Right cardiac atrium (tissue), 5 donors: ENCODE measurements at regions of chr11 and their contacts with region 1.

Region 1: GRCh38 chr11:79076526-79077115 is 364.2 kb downstream of the TENM4 start:
- DNase-seq: peak; percentile 53 to 83 (median 71)
- ATAC-seq: peak in 1 of 2 donors; percentile 47
- H3K4me3 ChIP-seq: no peak overlapping the region
- H3K27ac ChIP-seq: no peak overlapping the region
- H3K4me1 ChIP-seq: no peaks in the 10 kb centered on the region
- H3K27me3 ChIP-seq: no peaks in the 10 kb centered on the region

Region 2: DNA sequence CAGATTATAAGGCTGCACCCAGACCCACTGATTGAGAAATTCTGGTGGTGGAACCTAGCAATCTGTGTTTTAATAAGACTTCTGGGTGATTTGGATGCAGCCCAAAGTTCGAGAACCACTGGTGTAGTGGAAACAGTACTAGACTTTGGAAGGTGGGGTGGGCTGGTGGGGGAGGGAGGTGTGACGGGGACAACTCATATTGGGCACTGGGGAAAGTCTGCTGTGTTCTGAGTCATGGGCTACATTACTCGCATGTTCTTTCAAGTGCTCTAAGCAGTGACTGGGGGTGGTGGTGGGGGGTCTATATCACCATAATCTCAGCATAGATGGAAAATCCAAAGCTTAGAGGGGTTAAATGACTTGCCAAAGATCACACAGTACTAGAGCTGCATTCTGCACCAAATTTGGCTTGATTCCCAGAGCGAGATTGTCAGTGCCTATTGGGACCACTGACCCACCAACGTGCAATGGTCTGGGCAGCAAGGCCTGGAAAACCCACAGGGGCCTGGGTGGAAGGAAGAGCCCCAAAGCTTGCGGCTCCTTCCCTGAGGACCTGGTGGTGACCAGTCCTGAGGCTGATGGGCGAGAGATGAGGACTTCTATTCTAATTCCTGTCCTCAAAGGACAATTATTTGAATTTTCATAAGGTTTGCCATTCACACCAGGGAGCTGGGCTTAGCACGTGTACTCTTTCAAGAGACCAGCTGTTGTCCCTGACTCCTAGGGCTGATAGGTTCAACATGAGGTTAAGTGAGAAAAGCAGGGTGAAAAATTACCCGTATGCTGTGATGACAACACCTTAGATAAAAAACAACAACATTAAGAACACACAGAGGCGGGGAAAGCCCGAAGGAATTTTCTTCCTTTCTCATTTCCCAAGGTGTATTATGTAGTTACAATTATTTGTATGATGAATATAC is 424.4 kb before region 1 on chr11:
- intact Hi-C with region 1: loop called (anchors 5 to 10 kb)
- DNase-seq: no peak
- ATAC-seq: no peak
- H3K4me3 ChIP-seq: no peak overlapping the region
- H3K27ac ChIP-seq: no peak overlapping the region
- H3K4me1 ChIP-seq: no peaks in the 10 kb centered on the region
- H3K27me3 ChIP-seq: no peaks in the 10 kb centered on the region

Region 3: DNA sequence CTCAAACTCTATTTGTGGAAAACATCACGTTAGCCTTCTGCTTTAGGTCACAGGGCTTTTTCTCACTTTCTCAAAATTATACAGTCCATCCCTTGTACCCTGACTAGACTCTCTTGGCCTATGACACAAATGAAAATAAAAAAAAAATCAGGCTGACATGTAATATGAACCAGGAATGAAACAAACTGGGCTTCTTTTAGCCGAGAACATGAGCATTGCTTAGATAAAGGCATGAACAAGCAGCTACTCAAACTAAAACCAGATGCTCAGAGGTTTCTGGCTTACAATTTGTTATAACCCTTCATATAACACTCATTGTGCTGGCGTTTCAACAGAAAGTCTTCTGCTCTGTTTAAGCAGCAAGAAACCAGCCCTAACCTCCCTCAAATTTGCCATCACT is 236.4 kb before region 1 on chr11:
- intact Hi-C with region 1: no loop called
- DNase-seq: no peak
- ATAC-seq: peak; percentile 75 to 87
- H3K4me3 ChIP-seq: no peak overlapping the region
- H3K27ac ChIP-seq: peak overlapping the region; percentile 56
- H3K4me1 ChIP-seq: no peaks in the 10 kb centered on the region
- H3K27me3 ChIP-seq: no peaks in the 10 kb centered on the region

Region 4: GRCh38 chr11:78961247-78961646 is 115.4 kb before region 1 on chr11:
- intact Hi-C with region 1: no loop called
- DNase-seq: no peak
- ATAC-seq: peak; percentile 59 to 75
- H3K4me3 ChIP-seq: no peak overlapping the region
- H3K27ac ChIP-seq: no peak overlapping the region
- H3K4me1 ChIP-seq: no peaks in the 10 kb centered on the region
- H3K27me3 ChIP-seq: no peaks in the 10 kb centered on the region

Region 5: DNA sequence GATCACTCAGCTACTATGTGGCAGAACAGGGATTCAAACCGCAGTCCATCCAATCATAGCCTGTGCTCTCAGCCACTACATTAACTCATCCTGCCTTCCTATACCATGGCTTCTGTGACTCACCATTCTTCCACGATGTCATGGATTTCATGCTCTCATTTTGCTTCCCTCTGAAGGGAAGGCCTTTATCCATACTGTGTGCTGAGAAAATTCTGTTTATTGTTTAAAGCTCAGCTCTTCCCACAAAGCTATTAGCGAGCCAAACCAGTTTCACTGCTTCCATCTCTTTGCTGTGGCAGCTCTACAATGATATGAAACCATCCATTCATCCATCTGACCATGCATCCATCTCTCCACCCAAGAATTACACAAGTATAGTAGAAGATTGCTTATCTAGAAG is 74.4 kb after region 1 on chr11:
- intact Hi-C with region 1: no loop called
- DNase-seq: no peak
- ATAC-seq: no peak
- H3K4me3 ChIP-seq: no peak overlapping the region
- H3K27ac ChIP-seq: no peak overlapping the region
- H3K4me1 ChIP-seq: no peaks in the 10 kb centered on the region
- H3K27me3 ChIP-seq: no peaks in the 10 kb centered on the region

Region 6: GRCh38 chr11:79564288-79564925 is 487.8 kb after region 1 on chr11:
- intact Hi-C with region 1: no loop called
- DNase-seq: no peak
- ATAC-seq: no peak
- H3K4me3 ChIP-seq: no peak overlapping the region
- H3K27ac ChIP-seq: no peak overlapping the region
- H3K4me1 ChIP-seq: no peaks in the 10 kb centered on the region
- H3K27me3 ChIP-seq: no peaks in the 10 kb centered on the region